Psoas muscle (tissue), 8 donors: ENCODE measurements at regions of chr3 and their contacts with region 1.

Region 1: DNA sequence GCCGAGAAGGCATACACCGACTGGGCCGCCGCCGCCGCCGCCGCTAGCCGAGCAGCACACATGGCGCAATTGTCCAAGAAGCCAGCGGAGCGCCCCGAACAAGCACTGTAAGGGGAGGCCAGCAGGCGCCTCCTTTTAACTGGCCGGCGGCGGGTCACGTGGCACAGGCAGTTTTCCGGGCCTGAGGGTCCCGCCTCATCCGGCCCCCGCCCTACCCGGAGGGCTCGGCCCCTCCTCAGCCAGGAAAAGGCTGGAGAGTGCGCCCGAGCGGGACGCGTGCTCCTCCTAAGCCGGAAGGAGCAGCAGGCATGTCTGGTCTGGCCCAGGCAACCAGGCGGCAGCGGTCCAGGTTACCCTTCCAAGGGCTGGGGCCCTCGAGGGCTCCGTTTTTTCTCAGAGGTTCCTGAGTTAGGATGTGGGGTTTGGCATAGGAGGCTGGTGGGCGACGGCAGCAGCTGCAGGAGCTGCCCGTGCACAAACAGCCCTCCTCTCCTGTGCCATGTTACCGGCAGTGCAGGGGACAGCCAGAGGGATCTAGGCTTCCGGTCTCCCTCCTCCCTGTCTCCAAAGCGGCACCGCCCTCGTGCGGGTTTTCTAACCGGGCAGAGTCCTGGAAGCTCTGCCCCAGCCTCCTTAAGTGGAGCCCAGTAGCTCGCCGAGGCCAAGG is at the start of gene GPX1:
- DNase-seq: peak; percentile 96 to 97
- ATAC-seq: peak; percentile 88 to 91 (median 89)
- H3K4me3 ChIP-seq: peak within 1 kb of the TSS; percentile 76
- H3K27ac ChIP-seq: peak within 1 kb of the TSS; percentile 90
- H3K4me1 ChIP-seq: peaks cover 14% of the 10 kb centered on the region
- H3K27me3 ChIP-seq: no peaks in the 10 kb centered on the region
- CTCF ChIP-seq: no peak
- total RNA-seq, gene GPX1: 100 to 129 (median 116) TPM

Region 2: GRCh38 chr3:49377483-49377882 is 19.1 kb after region 1 on chr3:
- intact Hi-C with region 1: loop called in 1 of 2 experiments (anchors 2 kb)
- DNase-seq: no peak
- ATAC-seq: peak in 2 of 4 donors; percentile 17 to 42
- H3K4me3 ChIP-seq: no peak overlapping the region
- H3K27ac ChIP-seq: peak overlapping the region; percentile 13
- H3K4me1 ChIP-seq: peaks cover 24% of the 10 kb centered on the region
- H3K27me3 ChIP-seq: no peaks in the 10 kb centered on the region
- CTCF ChIP-seq: no peak

Region 3: DNA sequence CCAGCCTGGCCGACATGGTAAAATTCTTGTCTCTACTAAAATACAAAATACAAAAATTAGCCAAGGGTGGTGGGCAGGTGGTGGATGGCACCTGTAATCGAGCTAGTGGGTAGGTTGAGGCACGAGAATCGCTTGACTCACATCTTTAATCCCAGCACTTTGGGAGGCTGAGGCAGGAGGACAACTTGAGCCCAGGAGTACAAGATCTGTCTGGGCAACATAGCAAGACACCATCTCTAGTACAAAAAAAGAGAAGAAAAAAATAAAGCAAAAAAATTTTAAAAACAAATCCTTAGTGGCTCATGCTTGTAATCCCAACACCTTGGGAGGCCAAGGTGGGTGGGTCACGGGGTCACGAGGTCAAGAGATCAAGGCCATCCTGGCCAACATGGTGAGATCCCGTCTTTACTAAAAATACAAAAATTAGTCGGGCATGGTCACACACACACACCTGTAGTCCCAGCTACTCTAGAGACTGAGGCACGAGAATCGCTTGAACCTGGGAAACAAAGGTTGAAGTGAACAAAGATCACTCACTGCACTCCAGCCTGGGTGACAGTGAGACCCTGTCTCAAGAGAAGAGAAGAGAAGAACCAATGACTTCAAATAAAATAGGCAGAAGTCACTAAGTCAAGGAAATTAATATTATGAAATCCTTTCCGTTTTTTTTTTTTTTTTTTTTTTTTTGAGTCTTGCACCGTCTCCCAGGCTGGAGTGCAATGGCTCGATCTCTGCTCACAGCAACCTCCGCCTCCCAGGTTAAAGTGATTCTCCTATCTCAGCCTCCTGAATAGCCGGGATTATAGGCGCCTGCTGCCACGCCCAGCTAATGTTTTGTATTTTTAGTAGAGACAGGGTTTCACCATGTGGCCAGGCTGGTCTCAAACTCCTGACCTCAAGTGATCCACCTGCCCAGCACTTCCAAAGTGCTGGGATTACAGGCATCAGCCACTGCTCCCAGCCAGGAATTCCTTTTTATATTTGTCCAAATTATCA is 48.5 kb after region 1 on chr3:
- intact Hi-C with region 1: loop called (anchors 2 to 5 kb)
- DNase-seq: peak in 1 of 2 donors; percentile 32
- ATAC-seq: no peak
- H3K4me3 ChIP-seq: no peak overlapping the region
- H3K27ac ChIP-seq: peak overlapping the region; percentile 99
- H3K4me1 ChIP-seq: peaks cover 58% of the 10 kb centered on the region
- H3K27me3 ChIP-seq: no peaks in the 10 kb centered on the region
- CTCF ChIP-seq: no peak

Region 4: DNA sequence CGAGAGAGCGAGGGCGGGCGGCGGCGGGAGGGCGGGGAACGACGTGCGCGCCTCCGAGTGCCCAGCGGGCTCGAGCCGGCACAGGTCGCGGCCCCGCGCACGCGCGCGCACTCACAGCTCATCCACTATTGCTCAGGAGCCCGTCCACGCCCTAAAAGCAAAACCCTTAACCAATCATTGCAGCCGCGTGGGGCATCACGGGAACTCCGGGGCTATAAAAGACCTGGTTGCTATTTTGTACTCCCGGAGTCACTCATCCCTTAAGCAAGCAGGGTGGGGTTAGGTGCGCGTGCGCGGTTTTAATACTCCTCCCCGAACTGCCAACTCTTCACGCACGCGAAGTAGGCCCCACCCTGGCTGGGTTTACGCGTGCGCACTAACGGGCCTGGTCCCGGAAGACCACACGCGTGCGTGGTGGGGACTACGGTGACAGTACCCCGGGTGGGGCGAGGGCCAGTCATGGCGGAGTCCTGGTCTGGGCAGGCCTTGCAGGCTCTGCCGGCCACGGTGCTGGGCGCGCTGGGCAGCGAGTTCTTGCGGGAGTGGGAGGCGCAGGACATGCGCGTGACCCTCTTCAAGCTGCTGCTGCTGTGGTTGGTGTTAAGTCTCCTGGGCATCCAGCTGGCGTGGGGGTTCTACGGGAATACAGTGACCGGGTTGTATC is 53.8 kb after region 1 on chr3 and contains the starts of genes RHOA and TCTA:
- intact Hi-C with region 1: loop called (anchors 2 to 5 kb)
- DNase-seq: peak; percentile 99 to 100
- ATAC-seq: peak; percentile 92 to 94 (median 93)
- H3K4me3 ChIP-seq: peak within 1 kb of the TSS; percentile 87
- H3K27ac ChIP-seq: peak within 1 kb of the TSS; percentile 99
- H3K4me1 ChIP-seq: peaks cover 42% of the 10 kb centered on the region
- H3K27me3 ChIP-seq: no peaks in the 10 kb centered on the region
- CTCF ChIP-seq: no peak
- total RNA-seq, gene RHOA: 251 to 334 (median 271) TPM
- total RNA-seq, gene TCTA: 11.4 to 23.4 (median 16.7) TPM

Region 5: GRCh38 chr3:49445381-49445780 is 87.0 kb after region 1 on chr3:
- intact Hi-C with region 1: loop called in 1 of 2 experiments (anchors 5 kb)
- DNase-seq: no peak
- ATAC-seq: no peak
- H3K4me3 ChIP-seq: no peak overlapping the region
- H3K27ac ChIP-seq: no peak overlapping the region
- H3K4me1 ChIP-seq: peaks cover 10% of the 10 kb centered on the region
- H3K27me3 ChIP-seq: no peaks in the 10 kb centered on the region
- CTCF ChIP-seq: no peak

Region 6: GRCh38 chr3:49607796-49608195 is 249.4 kb after region 1 on chr3:
- intact Hi-C with region 1: no loop called
- DNase-seq: no peak
- ATAC-seq: no peak
- H3K4me3 ChIP-seq: no peak overlapping the region
- H3K27ac ChIP-seq: no peak overlapping the region
- H3K4me1 ChIP-seq: no peaks in the 10 kb centered on the region
- H3K27me3 ChIP-seq: no peaks in the 10 kb centered on the region
- CTCF ChIP-seq: no peak